SK-N-SH (cell line): ENCODE measurements at regions of chr15 and their contacts with region 1.

Region 1: DNA sequence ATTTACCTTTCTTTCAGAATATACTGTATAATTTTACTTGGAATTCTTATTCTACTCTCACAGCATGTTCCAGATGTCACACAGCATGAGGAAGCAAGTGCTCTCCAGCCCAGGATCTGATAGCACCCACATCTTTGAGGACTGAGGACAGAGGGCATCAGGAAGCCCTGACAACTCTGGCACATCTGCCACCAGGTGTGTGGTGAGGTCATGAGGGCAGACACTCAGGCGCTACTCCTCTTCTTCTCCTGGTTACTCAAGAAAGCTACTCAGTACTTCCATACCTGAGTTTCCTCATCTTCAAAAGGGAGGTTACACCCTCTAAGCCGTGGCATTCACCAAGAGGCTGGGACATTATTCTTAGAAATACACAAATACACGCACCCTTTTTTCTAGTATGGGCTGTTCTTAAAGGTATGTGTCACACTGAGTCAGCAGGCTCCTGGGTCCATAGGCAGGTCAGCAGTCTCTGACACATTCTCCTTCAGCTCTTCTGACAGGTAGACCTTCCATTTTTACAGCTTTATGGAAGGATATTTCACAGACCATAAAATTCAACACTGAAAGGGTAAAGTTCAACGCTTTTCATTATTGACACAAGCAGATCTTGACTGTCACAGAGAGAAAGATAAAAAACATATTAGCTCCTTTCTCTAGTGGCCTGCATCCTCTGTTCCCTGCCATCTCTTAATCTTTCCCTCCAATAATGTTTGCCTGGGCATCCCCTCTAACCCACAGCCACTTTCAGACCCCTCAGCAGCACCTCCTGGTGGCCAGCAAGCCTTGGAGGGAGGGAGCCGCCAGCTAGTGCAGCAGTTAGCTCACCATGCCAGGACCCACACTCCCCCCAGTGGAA is 103.2 kb upstream of the TJP1 start:
- DNase-seq: peak; percentile 79
- H3K4me3 ChIP-seq: no peak overlapping the region; a peak in 1 of 4 replicates
- H3K27ac ChIP-seq: no peak overlapping the region
- H3K4me1 ChIP-seq: no peaks in the 10 kb centered on the region; a peak in 1 of 4 replicates
- H3K27me3 ChIP-seq: no peaks in the 10 kb centered on the region
- CTCF ChIP-seq: peak; percentile 86
- EP300 ChIP-seq: no peak
- RAD21 ChIP-seq: peak; percentile 83

Region 2: GRCh38 chr15:29740692-29741311 is 184.7 kb before region 1 on chr15:
- CTCF ChIA-PET with region 1: interaction called, 104 read pairs
- POLR2A ChIA-PET with region 1: no interaction called
- DNase-seq: peak; percentile 54
- H3K4me3 ChIP-seq: no peak overlapping the region
- H3K27ac ChIP-seq: no peak overlapping the region
- H3K4me1 ChIP-seq: peaks cover 0 to 12% of the 10 kb centered on the region in 2 experiments; a peak in 1 of 4 replicates
- H3K27me3 ChIP-seq: no peaks in the 10 kb centered on the region
- CTCF ChIP-seq: peak; percentile 50
- EP300 ChIP-seq: peak in 1 of 2 experiments; percentile 53; a peak in 1 of 4 replicates
- RAD21 ChIP-seq: peak; percentile 68

Region 3: GRCh38 chr15:29821416-29822131 is 103.9 kb before region 1 on chr15:
- CTCF ChIA-PET with region 1: interaction called, 10 read pairs
- POLR2A ChIA-PET with region 1: no interaction called
- DNase-seq: peak; percentile 80
- H3K4me3 ChIP-seq: peak overlapping the region; percentile 74 to 84
- H3K27ac ChIP-seq: peak overlapping the region; percentile 81 to 93
- H3K4me1 ChIP-seq: peaks cover 10 to 14% of the 10 kb centered on the region in 2 experiments; a peak in 3 of 4 replicates
- H3K27me3 ChIP-seq: no peaks in the 10 kb centered on the region; the same call in 1 of the 2 replicates
- CTCF ChIP-seq: peak; percentile 35
- EP300 ChIP-seq: no peak
- RAD21 ChIP-seq: no peak; the same call in 1 of the 2 replicates

Region 4: DNA sequence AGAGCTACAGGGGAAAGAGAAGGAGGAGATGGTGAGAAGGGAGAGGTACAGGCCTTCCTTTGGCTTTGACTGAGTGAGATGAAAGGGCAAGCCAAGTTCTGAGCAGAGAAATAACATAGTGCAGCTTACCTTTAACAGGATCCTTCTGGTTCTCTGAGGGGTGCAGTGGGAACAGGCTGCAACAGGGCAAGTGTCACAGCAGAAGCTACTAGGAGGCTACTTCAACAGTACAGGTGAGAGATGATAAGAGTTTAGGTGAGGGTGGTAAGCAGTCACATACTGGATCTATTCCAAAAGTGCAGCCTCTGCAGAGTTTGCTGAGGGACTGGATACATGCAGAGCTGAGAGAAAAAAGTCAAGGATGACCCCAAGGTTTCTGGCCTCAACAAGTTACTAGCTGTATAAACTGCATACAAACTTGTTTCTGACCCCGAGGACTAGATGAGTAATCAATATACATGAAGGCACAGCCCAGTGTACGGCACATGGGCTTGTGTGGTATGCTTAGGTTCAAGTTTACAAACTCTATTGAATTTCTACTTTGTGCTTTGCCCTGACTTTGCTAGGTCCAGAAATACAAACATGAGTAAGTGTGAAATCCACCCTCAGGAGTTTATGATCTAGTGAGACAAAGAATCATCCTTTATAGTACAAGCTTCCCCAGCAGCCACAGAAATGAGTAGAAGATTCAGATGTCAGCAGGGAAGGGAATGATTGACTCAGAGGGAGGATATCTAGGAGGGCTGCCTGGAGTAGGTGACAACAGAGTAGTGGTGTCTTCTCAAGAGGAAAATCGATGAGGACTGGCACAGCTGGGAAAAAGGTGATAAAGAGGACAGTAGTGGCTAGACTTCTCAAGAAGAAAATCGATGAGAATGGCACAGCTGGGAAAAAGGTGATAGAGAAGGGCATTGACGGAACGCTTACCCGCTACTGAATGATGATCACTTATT is 24.9 kb before region 1 on chr15:
- CTCF ChIA-PET with region 1: interaction called, 11 read pairs
- POLR2A ChIA-PET with region 1: no interaction called
- DNase-seq: no peak
- H3K4me3 ChIP-seq: no peak overlapping the region
- H3K27ac ChIP-seq: no peak overlapping the region
- H3K4me1 ChIP-seq: no peaks in the 10 kb centered on the region
- H3K27me3 ChIP-seq: no peaks in the 10 kb centered on the region; the same call in 1 of the 2 replicates
- CTCF ChIP-seq: no peak
- EP300 ChIP-seq: no peak
- RAD21 ChIP-seq: no peak

Region 5: DNA sequence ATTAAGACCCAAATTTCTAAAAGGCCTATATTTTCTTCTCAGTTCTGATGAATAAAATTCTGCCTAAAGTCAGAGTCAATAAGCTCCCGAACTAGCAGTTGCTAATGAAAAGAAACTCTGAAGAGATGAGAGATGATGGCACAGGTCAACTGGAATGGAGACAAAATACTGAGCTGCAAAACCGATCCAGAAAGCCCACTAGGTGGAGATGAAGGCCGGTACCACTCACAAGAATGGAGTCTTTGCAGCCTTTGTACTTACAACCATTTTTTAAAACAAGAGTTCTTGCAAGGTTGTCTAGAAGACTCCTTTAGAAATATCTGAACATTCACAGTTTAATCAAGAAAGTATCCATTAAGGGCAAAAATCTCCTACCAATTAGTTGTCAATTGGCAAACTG is 16.7 kb after region 1 on chr15:
- CTCF ChIA-PET with region 1: interaction called, 13 read pairs
- POLR2A ChIA-PET with region 1: no interaction called
- DNase-seq: peak; percentile 22
- H3K4me3 ChIP-seq: no peak overlapping the region
- H3K27ac ChIP-seq: no peak overlapping the region
- H3K4me1 ChIP-seq: peaks cover 0 to 3% of the 10 kb centered on the region in 2 experiments; a peak in 1 of 4 replicates
- H3K27me3 ChIP-seq: no peaks in the 10 kb centered on the region
- CTCF ChIP-seq: peak; percentile 24; the same call in 1 of the 2 replicates
- EP300 ChIP-seq: no peak
- RAD21 ChIP-seq: peak; percentile 31; the same call in 1 of the 2 replicates